A673 (cell line): ENCODE measurements at regions of chr20 and their contacts with region 1.

Region 1: GRCh38 chr20:53828682-53829254 is 235.1 kb upstream of the ZNF217 start:
- DNase-seq: peak; percentile 98
- H3K4me3 ChIP-seq: peak overlapping the region; percentile 34
- H3K27ac ChIP-seq: peak overlapping the region; percentile 92
- H3K4me1 ChIP-seq: peaks cover 49% of the 10 kb centered on the region
- H3K27me3 ChIP-seq: no peaks in the 10 kb centered on the region
- CTCF ChIP-seq: peak; percentile 47

Region 2: GRCh38 chr20:53594068-53595017 is 234.4 kb before region 1 on chr20:
- CTCF ChIA-PET with region 1: no interaction called
- POLR2A ChIA-PET with region 1: no interaction called
- intact Hi-C with region 1: loop called (anchors 5 kb)
- DNase-seq: peak; percentile 93
- H3K4me3 ChIP-seq: peak overlapping the region; percentile 79
- H3K27ac ChIP-seq: peak overlapping the region; percentile 86
- H3K4me1 ChIP-seq: peaks cover 47% of the 10 kb centered on the region
- H3K27me3 ChIP-seq: no peaks in the 10 kb centered on the region
- CTCF ChIP-seq: no peak

Region 3: DNA sequence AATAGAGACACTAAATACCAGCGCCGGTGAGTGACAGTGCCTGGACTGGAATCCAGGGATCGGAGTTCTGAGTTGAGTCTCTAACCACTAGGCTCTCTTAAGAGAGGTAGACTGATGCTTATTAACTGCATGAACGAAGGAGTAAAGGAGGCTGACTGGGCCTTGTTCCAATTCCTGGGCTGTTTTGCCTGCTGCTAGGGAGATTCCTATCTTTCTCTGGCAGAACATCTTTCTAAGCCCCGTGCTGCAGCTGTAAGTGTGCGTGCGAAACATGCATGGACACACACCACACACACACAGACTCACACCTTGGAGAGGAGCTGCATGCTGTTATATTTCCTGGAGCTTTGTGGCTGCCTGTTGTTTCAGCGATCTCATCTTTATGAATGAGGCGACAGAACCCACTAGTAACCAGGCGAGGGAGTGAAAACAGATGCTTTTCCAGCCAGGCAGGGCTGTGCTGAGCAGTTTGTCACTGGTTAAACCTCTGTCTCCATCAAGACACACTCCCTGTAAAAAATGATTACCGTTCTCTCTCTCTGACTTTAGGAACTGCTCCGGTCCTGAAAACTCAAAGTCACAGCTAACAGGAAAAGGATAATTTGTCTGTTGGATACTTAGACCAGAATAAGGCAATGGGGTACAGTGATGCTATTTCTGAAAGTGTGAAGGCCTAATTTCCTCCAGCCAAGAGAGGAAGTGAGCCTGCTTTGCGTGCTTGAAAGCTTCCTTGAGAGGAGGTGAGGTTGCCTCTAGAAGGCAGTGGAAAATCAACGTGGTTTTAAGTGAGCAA is 77.7 kb before region 1 on chr20:
- CTCF ChIA-PET with region 1: no interaction called
- POLR2A ChIA-PET with region 1: no interaction called
- intact Hi-C with region 1: loop called (anchors 5 kb)
- DNase-seq: peak; percentile 81
- H3K4me3 ChIP-seq: no peak overlapping the region
- H3K27ac ChIP-seq: peak overlapping the region; percentile 75
- H3K4me1 ChIP-seq: peaks cover 59% of the 10 kb centered on the region
- H3K27me3 ChIP-seq: no peaks in the 10 kb centered on the region
- CTCF ChIP-seq: no peak

Region 4: DNA sequence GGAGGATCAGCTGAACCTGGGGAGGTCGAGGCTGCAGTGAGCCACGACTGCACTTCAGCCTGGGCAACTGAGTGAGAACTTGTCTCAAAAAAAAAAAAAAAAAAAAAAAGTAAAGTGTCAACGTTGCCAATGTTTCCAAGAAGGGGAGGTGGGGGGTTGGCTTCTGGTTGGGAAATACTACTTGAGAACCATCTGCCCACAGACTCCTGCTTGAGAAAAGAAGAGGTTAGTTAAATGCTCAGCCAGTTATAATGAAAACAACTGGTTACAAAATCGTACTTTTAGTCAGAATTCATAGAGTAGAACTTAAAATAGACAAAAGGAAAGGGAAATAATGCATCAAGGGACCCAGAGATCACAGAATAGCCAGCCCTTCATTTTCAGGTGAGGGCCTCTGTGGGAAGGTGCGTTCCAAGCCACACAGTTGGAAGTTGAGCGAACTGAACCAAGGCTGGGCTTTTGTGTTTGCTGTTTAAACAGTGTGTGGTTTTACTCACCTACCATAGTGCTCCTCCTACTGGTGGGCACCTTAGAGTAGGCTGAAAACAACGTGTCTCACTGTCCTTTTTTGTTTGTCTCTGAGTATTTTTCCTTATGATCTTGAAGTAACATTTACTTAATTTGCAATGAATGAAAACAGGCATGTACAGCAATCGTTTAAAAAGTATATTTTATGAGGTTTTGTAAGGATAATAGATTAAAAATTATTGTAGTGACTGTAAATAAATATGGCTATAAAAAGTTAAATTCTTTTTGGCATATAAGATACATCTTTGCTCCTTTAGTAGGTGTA is 40.9 kb after region 1 on chr20:
- CTCF ChIA-PET with region 1: no interaction called
- POLR2A ChIA-PET with region 1: no interaction called
- intact Hi-C with region 1: loop called (anchors 5 kb)
- DNase-seq: peak; percentile 84
- H3K4me3 ChIP-seq: no peak overlapping the region
- H3K27ac ChIP-seq: no peak overlapping the region
- H3K4me1 ChIP-seq: peaks cover 72% of the 10 kb centered on the region
- H3K27me3 ChIP-seq: no peaks in the 10 kb centered on the region
- CTCF ChIP-seq: peak; percentile 92

Region 5: DNA sequence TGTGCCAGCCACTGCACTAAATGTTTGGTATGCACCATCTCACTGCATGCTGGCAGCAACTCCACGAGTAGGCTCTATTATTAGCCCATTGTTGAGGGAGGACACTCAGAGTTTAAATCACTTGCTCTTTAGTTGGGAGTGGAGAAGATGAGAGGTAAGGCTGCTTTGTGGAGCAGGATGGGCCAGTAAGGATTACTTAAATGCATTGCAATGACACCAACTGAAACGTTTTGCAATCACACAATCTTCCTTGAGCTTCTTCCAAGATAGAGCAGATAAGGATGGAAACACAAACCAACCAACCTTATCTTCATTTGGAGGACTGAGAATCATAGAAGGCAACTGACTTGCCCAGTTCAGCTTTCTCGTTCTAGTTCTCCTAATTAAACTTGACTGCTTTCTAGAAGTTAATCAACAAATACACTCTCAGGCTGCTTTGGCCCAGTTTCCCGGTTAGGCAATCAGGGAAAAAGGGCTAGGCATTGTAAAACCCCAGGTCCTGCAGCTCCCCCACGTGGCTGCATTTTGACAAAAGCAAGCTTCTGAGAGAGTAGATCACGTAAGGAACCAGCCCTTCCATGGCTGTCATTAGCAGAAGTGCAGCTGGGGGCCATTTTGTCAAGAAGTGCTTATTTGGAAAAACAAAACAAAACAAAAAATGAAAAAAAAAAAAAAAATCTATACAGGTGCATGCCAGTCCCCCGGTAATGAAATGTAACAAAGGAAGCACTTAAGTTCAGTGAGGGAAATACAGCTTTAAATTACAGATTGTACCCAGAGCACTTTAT is 111.0 kb after region 1 on chr20:
- CTCF ChIA-PET with region 1: interaction called, 3 read pairs
- POLR2A ChIA-PET with region 1: no interaction called
- intact Hi-C with region 1: loop called (anchors 1 kb)
- DNase-seq: peak; percentile 98
- H3K4me3 ChIP-seq: peak overlapping the region; percentile 25
- H3K27ac ChIP-seq: peak overlapping the region; percentile 71
- H3K4me1 ChIP-seq: peaks cover 72% of the 10 kb centered on the region
- H3K27me3 ChIP-seq: no peaks in the 10 kb centered on the region
- CTCF ChIP-seq: peak; percentile 91